Caco-2 (cell line): ENCODE measurements at regions of chr1 and their contacts with region 1.

Region 1: DNA sequence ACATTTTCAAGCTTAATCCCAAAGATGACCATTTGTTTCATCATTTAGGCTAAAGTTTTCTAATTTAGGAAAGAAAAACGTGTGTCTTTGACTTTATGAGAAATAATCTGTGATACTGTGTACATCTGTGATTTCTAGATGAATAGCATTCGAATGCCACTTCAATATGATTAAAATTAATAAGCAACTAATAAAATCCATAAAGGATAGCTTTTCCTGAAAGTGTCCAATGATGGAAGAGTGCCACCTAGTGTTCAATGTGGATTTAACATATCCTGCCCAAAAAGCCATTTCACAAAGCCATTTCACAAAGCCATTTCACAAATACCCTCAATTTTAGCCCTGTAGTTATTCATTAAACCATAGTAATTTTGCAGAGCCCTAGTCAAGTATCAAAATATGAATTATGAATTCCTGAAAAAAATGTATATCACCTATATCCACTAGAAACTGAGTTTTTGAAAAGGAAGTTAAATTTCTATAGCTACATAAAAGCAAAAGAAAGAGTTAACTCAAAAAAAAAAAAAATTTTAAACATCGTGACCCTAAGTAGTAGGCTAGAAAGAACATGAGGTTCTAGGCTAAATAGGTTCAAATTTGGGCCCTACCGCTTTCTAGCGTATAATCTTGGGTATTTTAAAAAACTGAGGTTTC is 19.1 kb downstream of the NME7 start:
- DNase-seq: peak in 1 of 2 experiments; percentile 62
- H3K4me3 ChIP-seq: no peak overlapping the region
- H3K4me3 Mint-ChIP-seq: no peak overlapping the region
- H3K27ac Mint-ChIP-seq: no peak overlapping the region
- H3K4me1 ChIP-seq: peaks cover 30% of the 10 kb centered on the region
- H3K4me1 Mint-ChIP-seq: peaks cover 34% of the 10 kb centered on the region
- H3K27me3 ChIP-seq: no peaks in the 10 kb centered on the region
- H3K27me3 Mint-ChIP-seq: no peaks in the 10 kb centered on the region
- CTCF ChIP-seq: peak; percentile 67 to 78

Region 2: DNA sequence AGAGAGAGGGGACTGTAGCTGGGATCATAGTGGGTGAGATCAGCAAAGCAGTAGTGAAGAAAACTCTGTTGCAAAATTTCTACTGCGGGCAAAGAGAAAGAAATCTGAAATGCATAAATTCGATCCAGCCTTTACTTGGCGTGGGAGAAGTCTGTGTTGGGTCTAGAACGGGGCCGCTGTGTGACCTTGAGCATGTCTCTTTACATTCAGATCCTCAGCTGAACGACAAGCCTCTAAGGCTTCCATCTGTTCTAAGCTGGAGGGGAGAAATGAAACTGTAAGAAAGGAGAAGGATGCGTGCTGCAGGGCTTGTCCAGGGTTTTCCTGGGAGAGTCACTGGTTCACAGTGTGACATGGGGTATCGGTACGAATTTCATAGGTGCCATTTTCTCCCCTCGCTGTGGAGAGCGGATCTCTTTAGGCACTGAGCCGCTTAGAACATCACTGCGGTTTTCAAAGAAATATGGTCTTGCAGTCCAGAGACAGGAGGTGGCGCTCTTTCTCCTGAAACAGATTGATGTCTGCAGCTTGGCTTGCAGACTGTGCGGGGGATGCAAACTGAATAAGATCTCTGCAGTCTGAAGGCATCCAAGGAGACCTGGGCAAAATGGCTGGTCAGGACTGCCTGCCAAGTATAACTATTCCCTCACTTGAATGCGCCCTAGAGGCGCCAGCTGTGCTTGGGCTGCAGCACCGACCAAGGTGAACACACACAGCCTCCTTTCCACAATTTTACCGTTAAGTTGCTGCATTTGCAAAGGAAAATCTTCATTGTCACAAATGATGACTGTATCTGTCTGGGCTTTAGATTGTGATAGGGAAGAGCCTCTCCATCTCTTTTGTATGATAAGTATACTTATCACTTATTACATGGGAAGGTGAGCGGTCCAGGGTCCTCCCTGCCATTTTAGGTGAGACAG is 908.8 kb before region 1 on chr1:
- CTCF ChIA-PET with region 1: no interaction called
- POLR2A ChIA-PET with region 1: no interaction called
- intact Hi-C with region 1: loop called (anchors 5 kb)
- DNase-seq: peak; percentile 73 to 76
- H3K4me3 ChIP-seq: no peak overlapping the region
- H3K4me3 Mint-ChIP-seq: no peak overlapping the region
- H3K27ac Mint-ChIP-seq: no peak overlapping the region
- H3K4me1 ChIP-seq: peaks cover 8% of the 10 kb centered on the region; the same call in 1 of the 2 replicates
- H3K4me1 Mint-ChIP-seq: peaks cover 29% of the 10 kb centered on the region
- H3K27me3 ChIP-seq: no peaks in the 10 kb centered on the region
- H3K27me3 Mint-ChIP-seq: no peaks in the 10 kb centered on the region
- CTCF ChIP-seq: peak; percentile 68 to 80

Region 3: DNA sequence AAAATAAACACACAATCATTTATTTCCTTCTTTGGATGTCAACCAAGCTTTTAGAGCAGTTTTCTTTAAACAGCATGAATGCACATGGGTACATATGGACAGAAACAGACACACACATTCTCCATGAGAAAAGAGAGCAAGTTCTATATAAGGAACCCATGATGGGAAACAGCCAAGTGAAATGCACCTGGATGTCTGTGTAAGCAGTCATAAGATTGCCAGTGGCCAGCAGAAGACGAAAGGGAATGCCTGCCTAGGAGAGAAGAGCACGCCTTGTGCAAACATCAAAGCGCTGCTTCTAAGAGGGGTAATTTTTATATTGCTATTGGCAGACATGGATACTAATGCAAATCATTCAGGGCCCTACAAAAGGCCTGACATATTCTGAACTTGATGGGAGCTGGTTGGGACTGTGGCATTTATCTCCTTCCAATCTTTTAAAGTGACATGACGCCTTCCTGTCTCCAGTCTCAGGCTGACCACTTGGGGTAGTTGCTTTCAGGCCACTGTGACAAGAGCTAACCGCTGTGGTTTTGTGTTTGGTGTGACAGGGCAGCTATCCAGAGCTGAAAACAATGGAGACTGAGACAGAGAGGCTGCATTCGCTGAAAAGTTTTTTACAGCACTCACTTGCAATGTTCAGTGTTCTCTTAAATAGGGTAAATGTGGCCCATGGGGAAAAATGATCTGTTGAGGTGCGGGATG is 544.6 kb before region 1 on chr1:
- CTCF ChIA-PET with region 1: interaction called, 7 read pairs
- POLR2A ChIA-PET with region 1: no interaction called
- intact Hi-C with region 1: loop called (anchors 5 kb)
- DNase-seq: no peak
- H3K4me3 ChIP-seq: no peak overlapping the region
- H3K4me3 Mint-ChIP-seq: peak overlapping the region; percentile 8
- H3K27ac Mint-ChIP-seq: peak overlapping the region; percentile 25
- H3K4me1 ChIP-seq: peaks cover 70% of the 10 kb centered on the region
- H3K4me1 Mint-ChIP-seq: peaks cover 47% of the 10 kb centered on the region
- H3K27me3 ChIP-seq: no peaks in the 10 kb centered on the region
- H3K27me3 Mint-ChIP-seq: no peaks in the 10 kb centered on the region
- CTCF ChIP-seq: no peak

Region 4: DNA sequence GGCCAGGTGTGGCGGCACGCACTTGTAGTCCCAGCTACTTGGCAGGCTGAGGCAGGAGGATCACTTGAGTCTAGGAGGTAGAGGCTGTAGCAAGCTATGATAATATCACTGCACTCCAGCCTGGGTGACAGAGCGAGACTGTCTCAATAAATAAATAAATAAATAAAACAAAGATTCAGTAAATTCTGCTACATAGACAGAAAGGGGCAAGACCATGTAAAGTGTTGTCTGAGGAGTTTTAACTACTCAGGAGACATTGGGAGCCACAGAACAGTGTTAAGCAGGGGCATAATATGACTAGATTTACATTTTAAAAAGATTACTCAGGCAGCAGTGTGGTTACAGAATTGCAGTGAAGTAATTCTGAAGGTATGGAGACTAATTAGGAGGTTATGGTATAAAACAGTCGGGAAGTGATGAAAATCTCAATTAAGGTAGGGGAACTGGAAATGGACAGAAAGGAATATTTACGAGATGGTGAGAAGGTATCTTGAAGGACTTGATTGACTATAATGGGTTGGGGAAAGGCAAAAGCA is 147.4 kb before region 1 on chr1:
- CTCF ChIA-PET with region 1: no interaction called
- POLR2A ChIA-PET with region 1: no interaction called
- intact Hi-C with region 1: loop called (anchors 5 kb)
- DNase-seq: no peak
- H3K4me3 ChIP-seq: no peak overlapping the region
- H3K4me3 Mint-ChIP-seq: no peak overlapping the region
- H3K27ac Mint-ChIP-seq: no peak overlapping the region
- H3K4me1 ChIP-seq: no peaks in the 10 kb centered on the region
- H3K4me1 Mint-ChIP-seq: peaks cover 6% of the 10 kb centered on the region
- H3K27me3 ChIP-seq: no peaks in the 10 kb centered on the region
- H3K27me3 Mint-ChIP-seq: no peaks in the 10 kb centered on the region
- CTCF ChIP-seq: no peak

Region 5: DNA sequence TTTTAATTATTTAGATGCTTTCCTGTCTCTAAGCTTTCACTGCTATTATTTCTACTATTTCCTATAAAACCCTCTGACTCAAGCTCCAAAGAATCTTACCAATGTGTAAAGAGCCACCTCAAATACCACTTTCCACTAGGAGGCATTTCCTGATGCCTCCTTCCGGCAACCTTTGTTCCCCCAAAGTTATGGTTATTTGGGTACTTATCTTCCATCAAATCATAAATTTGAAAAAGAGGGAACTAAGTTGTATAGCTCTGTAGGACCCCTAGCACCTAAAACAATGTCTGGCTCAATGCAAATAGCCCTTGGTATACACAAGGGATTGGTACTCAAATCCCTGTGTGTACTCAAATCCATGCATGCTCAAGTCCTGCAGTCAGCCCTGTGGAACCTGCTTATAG is 60.5 kb before region 1 on chr1:
- CTCF ChIA-PET with region 1: no interaction called
- POLR2A ChIA-PET with region 1: no interaction called
- intact Hi-C with region 1: no loop called
- DNase-seq: no peak
- H3K4me3 ChIP-seq: no peak overlapping the region
- H3K4me3 Mint-ChIP-seq: no peak overlapping the region
- H3K27ac Mint-ChIP-seq: no peak overlapping the region
- H3K4me1 ChIP-seq: peaks cover 9% of the 10 kb centered on the region
- H3K4me1 Mint-ChIP-seq: peaks cover 15% of the 10 kb centered on the region
- H3K27me3 ChIP-seq: no peaks in the 10 kb centered on the region
- H3K27me3 Mint-ChIP-seq: no peaks in the 10 kb centered on the region
- CTCF ChIP-seq: no peak